Panc1 (cell line): ENCODE measurements at regions of chr5 and their contacts with region 1.

Region 1: GRCh38 chr5:121968910-121969607 is 7.3 kb downstream of the SRFBP1 start:
- DNase-seq: peak; percentile 94
- ATAC-seq: peak; percentile 96
- H3K4me3 ChIP-seq: peak overlapping the region in 1 of 2 experiments; percentile 6; a peak in 2 of 4 replicates
- H3K27ac ChIP-seq: peak overlapping the region; percentile 77
- H3K4me1 ChIP-seq: peaks cover 34% of the 10 kb centered on the region
- H3K27me3 ChIP-seq: no peaks in the 10 kb centered on the region
- CTCF ChIP-seq: no peak

Region 2: DNA sequence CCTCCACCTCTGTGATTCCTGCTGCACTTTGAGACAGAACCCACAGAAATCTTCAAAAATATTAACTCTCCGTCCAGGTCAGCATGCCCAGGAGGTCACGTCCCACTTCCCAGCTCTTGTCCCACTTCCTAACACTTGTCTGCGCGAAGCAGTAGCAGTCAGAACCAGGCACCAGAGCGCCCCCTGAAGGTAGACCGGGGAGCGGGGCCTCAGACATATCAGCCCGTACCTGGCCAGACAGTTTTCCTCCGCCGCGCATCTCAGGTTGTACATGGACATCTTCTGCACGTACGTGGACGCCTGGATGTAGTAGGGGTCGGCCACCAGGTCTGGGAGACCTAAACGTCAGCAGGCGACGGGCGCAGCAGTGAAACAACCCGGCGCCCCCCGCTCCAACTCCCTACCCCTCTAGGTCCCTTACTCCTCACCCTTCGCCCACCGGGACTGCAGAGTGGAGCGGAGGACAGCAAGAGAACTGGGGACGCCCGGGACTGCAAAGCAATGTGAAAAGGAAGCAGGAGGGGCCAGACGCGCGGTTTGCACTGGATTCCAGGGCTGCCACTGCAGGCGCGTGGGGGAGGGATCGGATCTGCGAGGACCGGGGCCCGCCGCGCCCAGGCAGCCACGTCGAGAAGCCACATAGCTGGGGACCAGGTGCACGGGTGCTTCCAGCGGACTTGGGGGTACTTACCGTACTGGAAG is 107.8 kb after region 1 on chr5:
- CTCF ChIA-PET with region 1: interaction called, 4 read pairs
- POLR2A ChIA-PET with region 1: no interaction called
- in situ Hi-C with region 1: no loop called
- intact Hi-C with region 1: loop called (anchors 5 kb)
- DNase-seq: no peak
- ATAC-seq: peak; percentile 85
- H3K4me3 ChIP-seq: peak overlapping the region; percentile 50 to 57
- H3K27ac ChIP-seq: no peak overlapping the region
- H3K4me1 ChIP-seq: peaks cover 3% of the 10 kb centered on the region; the same call in 1 of the 2 replicates
- H3K27me3 ChIP-seq: peaks cover 8% of the 10 kb centered on the region
- CTCF ChIP-seq: peak; percentile 92

Region 3: GRCh38 chr5:122156724-122157325 is 187.8 kb after region 1 on chr5:
- CTCF ChIA-PET with region 1: interaction called, 3 read pairs
- POLR2A ChIA-PET with region 1: no interaction called
- in situ Hi-C with region 1: no loop called
- intact Hi-C with region 1: loop called (anchors 5 kb)
- DNase-seq: no peak
- ATAC-seq: no peak; the same call in 1 of the 2 replicates
- H3K4me3 ChIP-seq: no peak overlapping the region
- H3K27ac ChIP-seq: no peak overlapping the region
- H3K4me1 ChIP-seq: no peaks in the 10 kb centered on the region
- H3K27me3 ChIP-seq: no peaks in the 10 kb centered on the region
- CTCF ChIP-seq: peak; percentile 50; the same call in 1 of the 2 replicates